ENCODE measurements at regions of chr6 and their contacts with region 1.

Region 1: DNA sequence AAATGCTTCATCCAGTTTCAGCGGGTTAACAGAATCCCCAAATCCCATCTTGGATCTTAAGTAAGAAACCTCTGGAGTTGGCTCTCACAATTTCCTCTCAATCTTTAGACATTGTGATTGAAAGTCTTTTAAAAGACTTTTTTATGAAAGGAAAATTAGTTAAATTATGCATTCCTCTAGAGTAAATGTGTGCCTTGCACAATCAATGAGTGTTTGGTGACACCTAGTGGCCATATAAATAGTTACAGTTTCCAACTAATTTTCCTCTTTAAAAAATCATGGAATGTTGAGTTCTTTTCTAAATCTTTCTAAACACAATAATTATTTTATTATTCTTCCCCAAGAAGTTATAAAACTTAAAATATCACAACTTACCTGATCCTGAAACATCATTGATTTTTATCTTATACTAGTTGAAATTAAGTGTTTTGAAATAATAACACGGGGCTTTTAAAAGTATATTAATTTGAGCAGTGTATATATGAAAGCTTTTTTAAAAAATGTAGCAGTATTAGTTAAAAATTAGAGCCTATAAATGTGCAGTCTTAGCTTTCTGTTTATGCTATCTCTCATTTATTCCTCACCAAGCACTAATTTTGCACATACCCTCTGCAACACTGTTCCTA is 66.4 kb downstream of the PKHD1 start:
- DNase-seq: no peak
- H3K4me3 Mint-ChIP-seq: no peak overlapping the region
- H3K27ac Mint-ChIP-seq: no peak overlapping the region
- H3K4me1 Mint-ChIP-seq: no peaks in the 10 kb centered on the region
- H3K27me3 Mint-ChIP-seq: peaks cover 6% of the 10 kb centered on the region

Region 2: GRCh38 chr6:50128420-50129005 is 1892.5 kb before region 1 on chr6:
- CTCF ChIA-PET with region 1: no interaction called
- intact Hi-C with region 1: loop called (anchors 2 kb)
- DNase-seq: no peak
- H3K4me3 Mint-ChIP-seq: no peak overlapping the region
- H3K27ac Mint-ChIP-seq: no peak overlapping the region
- H3K4me1 Mint-ChIP-seq: no peaks in the 10 kb centered on the region
- H3K27me3 Mint-ChIP-seq: no peaks in the 10 kb centered on the region

Region 3: DNA sequence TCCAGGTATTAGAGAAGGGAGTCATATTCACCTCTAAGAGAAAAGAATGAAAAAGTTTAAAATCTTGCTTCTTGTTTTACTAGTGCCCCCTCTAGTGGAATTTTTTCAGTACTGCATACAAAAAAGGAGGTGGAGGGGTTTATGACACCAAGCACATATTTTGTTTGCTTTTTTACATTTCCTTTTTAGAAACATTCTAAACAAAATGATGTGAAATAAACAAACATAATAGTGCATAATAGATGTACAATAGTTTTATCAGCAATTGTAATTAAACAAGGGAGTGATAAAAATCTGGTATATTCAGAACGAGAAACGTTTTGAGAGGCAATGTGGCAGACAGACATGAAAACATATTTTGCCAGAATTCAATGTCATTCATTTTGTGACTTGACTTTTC is 1418.8 kb before region 1 on chr6:
- CTCF ChIA-PET with region 1: no interaction called
- intact Hi-C with region 1: loop called (anchors 2 kb)
- DNase-seq: no peak
- H3K4me3 Mint-ChIP-seq: no peak overlapping the region
- H3K27ac Mint-ChIP-seq: no peak overlapping the region
- H3K4me1 Mint-ChIP-seq: no peaks in the 10 kb centered on the region
- H3K27me3 Mint-ChIP-seq: no peaks in the 10 kb centered on the region

Region 4: GRCh38 chr6:51531623-51532022 is 489.4 kb before region 1 on chr6:
- CTCF ChIA-PET with region 1: no interaction called
- intact Hi-C with region 1: no loop called
- DNase-seq: no peak
- H3K4me3 Mint-ChIP-seq: no peak overlapping the region
- H3K27ac Mint-ChIP-seq: no peak overlapping the region
- H3K4me1 Mint-ChIP-seq: no peaks in the 10 kb centered on the region
- H3K27me3 Mint-ChIP-seq: no peaks in the 10 kb centered on the region

Region 5: GRCh38 chr6:51855310-51856082 is 165.6 kb before region 1 on chr6:
- CTCF ChIA-PET with region 1: interaction called, 14 read pairs
- intact Hi-C with region 1: loop called (anchors 1 kb)
- DNase-seq: peak; percentile 27
- H3K4me3 Mint-ChIP-seq: no peak overlapping the region
- H3K27ac Mint-ChIP-seq: no peak overlapping the region
- H3K4me1 Mint-ChIP-seq: no peaks in the 10 kb centered on the region
- H3K27me3 Mint-ChIP-seq: peaks cover 4% of the 10 kb centered on the region

Region 6: DNA sequence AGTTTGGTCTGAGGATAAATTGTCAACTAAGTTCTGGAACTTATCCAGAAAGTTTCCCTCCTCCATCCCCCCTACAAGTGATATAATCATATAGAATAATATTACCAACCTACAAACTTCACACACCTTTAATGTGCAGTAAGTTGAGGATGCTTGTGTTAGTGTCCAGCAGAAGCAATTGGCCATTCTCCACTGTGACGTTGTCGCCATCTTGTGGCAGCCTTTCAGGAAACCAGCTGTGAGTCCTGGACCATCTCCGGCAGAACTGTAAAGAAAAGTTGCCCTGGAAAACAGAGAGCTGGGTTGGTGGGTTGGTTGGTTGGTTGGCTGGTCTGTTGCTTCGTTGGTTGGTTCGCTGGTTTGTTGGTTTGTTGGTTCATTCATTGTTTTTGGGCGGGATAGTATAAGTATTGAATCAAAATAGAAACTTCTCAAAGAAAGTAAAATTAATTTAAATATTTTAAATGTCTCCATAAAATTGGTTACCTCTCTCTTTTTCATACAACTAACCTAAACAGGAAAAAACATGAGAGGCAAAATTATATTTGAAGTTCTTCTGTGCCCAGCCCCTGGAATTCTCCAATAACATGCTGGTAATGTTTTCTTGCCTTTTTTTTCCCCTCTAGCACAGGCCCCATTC is 61.2 kb before region 1 on chr6:
- CTCF ChIA-PET with region 1: interaction called, 4 read pairs
- intact Hi-C with region 1: loop called (anchors 5 kb)
- DNase-seq: peak; percentile 75
- H3K4me3 Mint-ChIP-seq: no peak overlapping the region
- H3K27ac Mint-ChIP-seq: no peak overlapping the region
- H3K4me1 Mint-ChIP-seq: no peaks in the 10 kb centered on the region
- H3K27me3 Mint-ChIP-seq: peaks cover 15% of the 10 kb centered on the region

Region 7: GRCh38 chr6:52049252-52050050 is 28.4 kb after region 1 on chr6:
- CTCF ChIA-PET with region 1: interaction called, 16 read pairs
- intact Hi-C with region 1: no loop called
- DNase-seq: peak; percentile 25
- H3K4me3 Mint-ChIP-seq: no peak overlapping the region
- H3K27ac Mint-ChIP-seq: no peak overlapping the region
- H3K4me1 Mint-ChIP-seq: no peaks in the 10 kb centered on the region
- H3K27me3 Mint-ChIP-seq: peaks cover 4% of the 10 kb centered on the region